Activated CD4-positive, alpha-beta memory T cell treated with anti-CD3 and anti-CD28 coated beads for 36 hours (primary cell): ENCODE measurements at regions of chr1 and their contacts with region 1.

Region 1: DNA sequence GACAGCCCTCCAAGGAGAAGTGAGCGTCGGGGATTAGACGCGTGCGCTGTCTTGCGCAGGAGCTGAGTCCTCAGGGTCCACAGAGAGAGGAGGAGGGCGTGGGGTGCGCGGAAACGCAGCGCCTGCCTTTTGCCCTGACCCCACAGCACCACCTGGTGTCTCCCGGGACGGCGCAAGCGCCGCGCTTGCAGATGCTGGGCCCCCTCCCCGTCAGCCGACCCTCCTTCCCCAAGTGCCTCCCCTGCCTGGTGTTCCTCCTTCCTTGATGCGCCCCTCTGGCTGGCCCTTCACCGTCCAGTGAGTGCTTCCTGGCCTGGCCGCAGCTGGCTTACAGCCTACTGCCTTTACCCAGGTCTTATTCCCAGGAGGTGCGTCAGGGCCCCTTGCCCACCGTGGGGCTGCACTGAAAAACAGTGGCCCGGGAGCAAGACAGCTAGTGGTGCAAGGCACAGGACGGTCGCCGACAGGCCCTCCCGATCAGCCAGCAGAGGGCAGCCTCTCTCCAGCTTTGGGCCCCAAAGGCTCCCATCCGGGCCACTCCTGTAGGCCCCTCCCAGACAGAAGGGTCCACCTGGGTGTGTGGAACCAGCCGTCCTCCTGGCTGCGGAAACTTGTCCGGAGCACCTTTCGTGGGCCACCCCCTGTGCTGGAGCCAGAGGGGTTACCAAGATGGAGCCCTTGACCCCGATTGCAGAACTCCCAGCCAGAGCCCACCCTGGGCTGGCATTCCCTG is 12.9 kb upstream of the PHLDA3 start:
- DNase-seq: peak; percentile 87
- H3K4me3 Mint-ChIP-seq: peak overlapping the region; percentile 35
- H3K27ac Mint-ChIP-seq: no peak overlapping the region
- H3K4me1 Mint-ChIP-seq: peaks cover 22% of the 10 kb centered on the region
- H3K27me3 Mint-ChIP-seq: peaks cover 10% of the 10 kb centered on the region

Region 2: DNA sequence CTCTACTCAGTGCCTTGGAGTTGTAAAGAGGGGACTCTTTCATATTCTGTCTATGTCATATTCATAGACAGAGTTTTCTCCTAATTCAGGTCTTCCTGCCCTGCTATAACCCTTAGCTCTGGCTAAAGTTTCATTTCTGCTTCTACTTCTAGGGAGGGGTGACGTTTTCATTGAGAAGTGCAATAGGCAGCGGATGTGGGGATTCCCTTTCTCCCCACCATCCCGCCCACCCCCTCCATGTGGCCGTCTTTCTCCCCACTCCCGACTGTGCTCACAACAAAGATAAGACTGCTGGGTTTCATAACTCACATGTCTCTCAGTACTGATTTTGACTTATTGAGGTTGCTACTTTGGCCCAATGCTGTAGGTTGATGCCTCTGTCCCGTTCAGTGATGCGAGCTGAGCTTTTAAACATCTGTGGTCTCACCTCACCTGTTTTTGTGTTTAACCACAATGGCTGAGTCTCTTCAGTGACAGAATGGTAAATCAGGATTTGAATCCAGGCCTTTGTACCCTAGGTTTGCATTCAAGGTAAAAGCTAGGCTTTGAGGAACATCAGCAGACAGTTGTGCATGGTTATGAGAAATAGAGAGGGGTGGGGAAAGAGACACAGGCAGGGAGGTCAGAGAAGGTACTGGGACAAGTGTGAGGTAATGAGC is 853.6 kb before region 1 on chr1:
- CTCF ChIA-PET with region 1: no interaction called
- POLR2A ChIA-PET with region 1: no interaction called
- intact Hi-C with region 1: no loop called
- DNase-seq: peak; percentile 85
- H3K4me3 Mint-ChIP-seq: peak overlapping the region; percentile 11
- H3K27ac Mint-ChIP-seq: peak overlapping the region; percentile 28
- H3K4me1 Mint-ChIP-seq: peaks cover 36% of the 10 kb centered on the region
- H3K27me3 Mint-ChIP-seq: no peaks in the 10 kb centered on the region

Region 3: GRCh38 chr1:201358596-201358995 is 123.3 kb before region 1 on chr1:
- CTCF ChIA-PET with region 1: no interaction called
- POLR2A ChIA-PET with region 1: no interaction called
- intact Hi-C with region 1: no loop called
- DNase-seq: no peak
- H3K4me3 Mint-ChIP-seq: no peak overlapping the region
- H3K27ac Mint-ChIP-seq: no peak overlapping the region
- H3K4me1 Mint-ChIP-seq: no peaks in the 10 kb centered on the region
- H3K27me3 Mint-ChIP-seq: peaks cover 9% of the 10 kb centered on the region

Region 4: DNA sequence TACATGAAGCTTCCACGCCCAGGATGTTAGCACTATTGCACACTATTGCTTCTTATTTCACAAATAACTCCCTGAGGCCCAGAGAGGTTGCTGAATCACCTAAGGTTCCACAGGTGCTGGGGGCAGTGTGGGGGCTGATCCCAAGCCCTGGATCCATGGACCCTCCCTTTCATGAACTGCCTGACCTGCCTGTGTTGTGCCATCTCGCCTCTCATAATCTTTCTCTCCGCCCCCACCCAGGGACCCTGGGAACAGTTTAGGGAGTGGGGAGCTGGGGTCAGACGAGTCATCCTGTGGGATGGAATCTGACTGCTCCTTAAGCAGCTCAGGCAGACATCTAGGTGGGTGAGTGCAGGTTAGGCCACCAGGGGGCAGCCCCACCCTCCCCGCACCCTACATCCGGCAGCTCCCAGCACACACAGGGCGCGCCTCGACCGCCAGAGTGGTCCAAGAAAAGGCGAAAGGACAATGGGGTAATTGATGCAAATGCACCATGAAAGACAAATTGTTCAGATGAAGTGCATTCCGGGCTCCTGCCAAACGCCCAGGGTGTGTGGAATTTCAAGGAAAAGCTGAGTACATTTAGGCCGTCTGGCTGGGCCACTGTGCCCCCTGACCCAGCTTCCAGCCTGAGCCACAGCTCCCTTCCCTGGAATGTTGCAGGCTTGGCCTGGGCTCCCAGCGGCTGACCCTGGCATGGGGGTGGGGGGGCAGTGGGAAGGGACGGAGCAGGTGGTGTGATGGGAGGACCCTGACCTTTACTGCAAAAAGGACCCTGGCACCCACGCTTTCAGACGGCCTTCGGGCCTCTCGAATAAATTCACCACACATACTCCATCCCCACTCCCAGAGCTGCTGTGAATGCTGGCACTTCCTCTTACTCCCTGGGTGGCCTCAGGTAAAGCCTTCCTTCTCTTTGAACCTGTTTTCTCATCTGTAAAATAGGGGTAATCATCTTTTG is 33.7 kb before region 1 on chr1:
- CTCF ChIA-PET with region 1: interaction called, 127 read pairs
- POLR2A ChIA-PET with region 1: interaction called, 4 read pairs
- intact Hi-C with region 1: loop called (anchors 1 kb)
- DNase-seq: peak; percentile 82
- H3K4me3 Mint-ChIP-seq: no peak overlapping the region
- H3K27ac Mint-ChIP-seq: no peak overlapping the region
- H3K4me1 Mint-ChIP-seq: peaks cover 2% of the 10 kb centered on the region
- H3K27me3 Mint-ChIP-seq: peaks cover 15% of the 10 kb centered on the region

Region 5: DNA sequence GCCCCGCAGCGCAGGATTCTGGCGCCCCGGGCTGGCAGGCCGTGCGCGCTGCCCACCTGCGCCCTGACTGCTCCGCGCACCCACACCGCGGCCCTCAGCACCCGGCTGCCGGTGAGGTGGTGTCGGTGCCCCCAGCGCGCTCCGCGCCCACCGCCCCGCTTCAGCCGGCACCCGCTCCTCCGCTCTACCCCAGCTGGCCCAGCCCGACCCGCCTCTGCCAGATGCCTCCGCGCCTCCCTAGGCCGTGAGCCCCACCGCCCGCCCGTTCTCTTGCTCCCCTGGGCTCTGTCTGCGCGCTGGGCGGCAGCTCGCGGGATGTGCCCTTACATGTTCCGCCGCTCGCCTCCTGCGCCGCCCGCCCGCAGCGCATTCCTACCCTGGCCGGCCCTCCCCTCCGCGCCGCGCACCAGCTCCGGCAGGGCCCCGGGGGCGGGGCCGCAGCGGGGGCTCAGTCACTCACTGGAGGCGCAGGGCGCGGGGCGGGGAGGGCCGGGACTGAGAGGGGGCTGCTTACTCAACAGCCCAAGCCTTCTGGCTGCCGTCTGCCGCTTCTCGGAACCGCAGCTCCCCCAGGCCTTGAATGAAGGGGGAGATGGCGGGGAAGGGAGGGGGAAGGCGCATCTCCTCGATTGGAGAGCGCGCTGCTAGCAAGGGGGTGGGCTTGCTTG is 12.9 kb before region 1 on chr1 and contains the start of gene PHLDA3:
- CTCF ChIA-PET with region 1: interaction called, 27 read pairs
- POLR2A ChIA-PET with region 1: interaction called, 4 read pairs
- intact Hi-C with region 1: loop called (anchors 1 kb)
- DNase-seq: peak; percentile 69
- H3K4me3 Mint-ChIP-seq: peak within 1 kb of the TSS; percentile 64
- H3K27ac Mint-ChIP-seq: no peak within 1 kb of the TSS
- H3K4me1 Mint-ChIP-seq: peaks cover 6% of the 10 kb centered on the region
- H3K27me3 Mint-ChIP-seq: peaks cover 36% of the 10 kb centered on the region
- total RNA-seq, gene PHLDA3: 3.4 to 4.1 TPM

Region 6: DNA sequence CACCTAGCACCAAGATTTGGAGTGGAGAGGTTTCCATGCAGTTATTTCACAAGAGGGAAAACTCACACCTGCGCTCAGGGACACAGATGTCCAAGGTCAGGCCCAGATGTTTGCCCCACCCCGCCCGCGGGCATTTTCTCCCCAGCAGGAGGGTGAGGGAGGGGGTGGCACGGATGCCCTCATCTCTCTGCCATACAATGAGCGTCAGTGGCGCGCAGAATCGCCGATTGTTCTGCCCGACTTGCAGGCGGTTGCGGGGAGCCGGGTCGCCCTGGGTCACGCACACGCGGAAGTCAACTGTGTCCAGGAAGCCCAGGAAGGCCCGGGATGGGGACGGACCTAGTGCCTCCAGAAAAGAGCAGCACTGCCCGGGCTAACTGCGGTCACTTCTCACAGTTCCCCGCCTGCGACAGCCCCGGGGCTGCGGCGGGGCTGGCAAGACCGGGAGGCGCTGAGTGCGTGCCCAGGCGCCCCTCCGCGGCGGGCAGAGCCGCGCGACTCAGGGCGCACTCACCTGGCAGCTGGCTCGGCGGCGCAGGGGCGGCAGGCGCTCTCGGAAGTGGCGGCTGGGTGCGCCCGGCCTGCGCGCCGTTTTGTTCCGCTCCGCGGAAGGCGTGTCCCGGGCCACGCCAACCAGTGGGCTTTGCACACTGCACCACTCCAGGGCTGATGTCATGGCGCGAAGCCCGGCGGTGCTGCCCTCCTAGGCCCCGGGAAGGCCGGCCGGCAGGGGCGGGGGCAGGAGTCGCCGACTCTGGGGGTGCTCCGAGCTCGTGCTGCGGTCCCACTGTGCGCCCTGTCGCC is 24.8 kb after region 1 on chr1 and contains the start of gene CSRP1:
- CTCF ChIA-PET with region 1: interaction called, 291 read pairs
- POLR2A ChIA-PET with region 1: interaction called, 10 read pairs
- intact Hi-C with region 1: loop called (anchors 1 kb)
- DNase-seq: peak; percentile 89
- H3K4me3 Mint-ChIP-seq: peak within 1 kb of the TSS; percentile 91
- H3K27ac Mint-ChIP-seq: peak within 1 kb of the TSS; percentile 83
- H3K4me1 Mint-ChIP-seq: peaks cover 37% of the 10 kb centered on the region
- H3K27me3 Mint-ChIP-seq: no peaks in the 10 kb centered on the region
- total RNA-seq, gene CSRP1: 48.4 to 51.8 TPM